Endothelial cell of umbilical vein (primary cell): ENCODE measurements at regions of chrX and their contacts with region 1.

Region 1: DNA sequence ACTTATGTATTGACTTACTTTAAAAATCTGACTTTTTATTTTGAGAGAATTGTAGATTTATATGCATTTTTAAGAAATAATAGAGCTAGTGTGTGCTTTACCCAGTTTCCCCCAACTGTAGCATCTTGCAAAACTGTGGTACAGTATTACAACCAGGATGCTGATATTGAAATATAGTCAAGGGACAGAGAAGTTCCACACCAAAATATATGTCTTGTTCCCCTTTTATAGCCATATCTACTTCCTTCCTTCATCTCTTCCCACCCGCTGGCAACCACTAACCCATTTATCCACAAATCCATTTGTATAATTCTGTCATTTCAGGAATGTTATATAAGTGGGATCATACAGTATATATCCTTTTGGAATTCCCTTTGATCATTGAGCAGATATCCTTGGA is 16.8 kb downstream of the KDM6A start:
- DNase-seq: no peak
- H3K4me3 ChIP-seq: no peak overlapping the region
- H3K27ac ChIP-seq: no peak overlapping the region
- H3K4me1 ChIP-seq: peaks cover 2% of the 10 kb centered on the region
- H3K27me3 ChIP-seq: no peaks in the 10 kb centered on the region
- CTCF ChIP-seq: no peak
- POLR2A ChIP-seq: no peak

Region 2: DNA sequence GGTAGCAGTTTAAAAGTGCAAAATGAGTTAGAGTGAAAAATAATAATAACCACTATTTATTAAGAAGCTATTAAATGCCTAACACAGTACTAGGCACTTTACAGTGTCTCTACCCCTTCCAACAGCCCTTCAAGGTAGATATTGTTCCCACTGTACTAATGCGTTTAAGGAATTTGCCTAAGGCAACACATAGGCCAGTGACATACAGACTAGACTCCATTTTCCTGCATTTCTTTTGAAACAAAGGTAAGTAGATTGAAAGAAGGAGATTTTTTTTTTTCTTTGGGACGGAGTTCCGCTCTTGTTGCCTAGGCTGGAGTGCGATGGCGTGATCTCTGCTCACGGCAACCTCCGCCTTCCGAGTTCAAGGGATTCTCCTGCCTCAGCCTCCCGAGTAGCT is 41.6 kb before region 1 on chrX:
- CTCF ChIA-PET with region 1: no interaction called
- POLR2A ChIA-PET with region 1: no interaction called
- dilution Hi-C with region 1: no loop called
- intact Hi-C with region 1: no loop called
- DNase-seq: no peak
- H3K4me3 ChIP-seq: no peak overlapping the region
- H3K27ac ChIP-seq: no peak overlapping the region
- H3K4me1 ChIP-seq: no peaks in the 10 kb centered on the region
- H3K27me3 ChIP-seq: no peaks in the 10 kb centered on the region
- CTCF ChIP-seq: no peak
- POLR2A ChIP-seq: no peak

Region 3: DNA sequence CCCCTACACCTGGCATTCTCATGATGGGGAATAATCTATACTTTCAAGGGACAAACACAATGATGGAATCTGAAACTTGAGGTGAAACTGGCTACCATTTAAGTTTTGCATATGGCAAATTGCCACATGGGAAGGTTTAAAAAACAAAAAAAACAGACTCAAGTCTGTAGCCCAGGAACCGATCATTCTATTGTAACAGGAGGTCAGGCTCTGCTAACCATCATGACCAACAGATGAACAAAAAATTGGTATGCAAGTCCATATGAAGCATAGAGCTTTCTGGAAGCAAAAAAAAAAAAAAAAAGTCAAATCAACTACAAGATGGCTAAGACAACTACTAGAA is 905.1 kb after region 1 on chrX:
- CTCF ChIA-PET with region 1: no interaction called
- POLR2A ChIA-PET with region 1: no interaction called
- dilution Hi-C with region 1: no loop called
- intact Hi-C with region 1: loop called (anchors 5 kb)
- DNase-seq: no peak
- H3K4me3 ChIP-seq: no peak overlapping the region
- H3K27ac ChIP-seq: no peak overlapping the region
- H3K4me1 ChIP-seq: no peaks in the 10 kb centered on the region
- H3K27me3 ChIP-seq: no peaks in the 10 kb centered on the region
- CTCF ChIP-seq: no peak
- POLR2A ChIP-seq: no peak